CD4-positive, alpha-beta T cell (primary cell): ENCODE measurements at regions of chr11 and their contacts with region 1.

Region 1: DNA sequence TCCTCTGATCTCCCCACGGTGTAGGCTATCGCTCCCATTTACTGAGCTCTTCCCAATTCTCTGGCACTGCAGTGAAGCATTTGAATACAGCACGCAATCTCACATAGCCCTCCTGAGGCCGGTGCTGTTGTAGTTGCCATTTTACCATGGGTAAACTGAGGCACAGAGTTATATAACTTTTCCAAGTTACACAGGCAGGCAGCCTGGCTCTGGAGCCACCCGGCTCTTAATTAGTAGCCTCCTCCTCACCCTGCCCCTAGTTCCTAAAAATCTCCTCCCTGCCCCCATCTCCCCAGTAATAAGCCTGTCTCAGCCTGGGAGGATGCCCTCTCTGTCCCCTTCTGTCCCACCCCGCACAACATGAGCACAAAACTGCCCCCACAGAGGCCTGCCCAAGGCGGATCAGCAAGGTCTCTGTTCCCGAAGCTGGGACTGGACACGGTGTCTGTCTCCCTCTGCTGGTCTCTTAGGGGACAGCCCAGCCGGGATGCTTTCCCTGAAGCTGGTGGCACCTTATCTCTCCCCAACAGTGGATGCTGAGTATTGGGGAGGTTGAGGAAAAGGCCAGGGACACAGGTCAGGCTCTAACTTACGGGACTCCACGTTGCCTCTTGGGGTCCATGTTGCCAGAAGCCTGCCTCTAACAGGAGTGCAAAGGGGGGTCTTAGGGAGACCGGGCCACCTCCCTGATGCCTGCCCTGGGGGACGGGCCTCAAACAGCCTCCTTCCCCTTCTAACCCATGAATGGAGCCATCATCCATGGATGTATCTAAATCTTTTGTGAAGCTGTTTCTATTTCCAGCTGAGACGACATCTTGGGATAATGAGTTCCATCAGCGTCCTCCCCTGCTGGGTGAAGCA is 9.1 kb upstream of the CLCF1 start:
- DNase-seq: peak; percentile 72 to 90 (median 82)
- ATAC-seq: peak; percentile 99
- H3K4me3 ChIP-seq: no peak overlapping the region
- H3K4me3 Mint-ChIP-seq: no peak overlapping the region
- H3K27ac ChIP-seq: no peak overlapping the region
- H3K27ac Mint-ChIP-seq: no peak overlapping the region
- H3K4me1 ChIP-seq: peaks cover 15% of the 10 kb centered on the region
- H3K4me1 Mint-ChIP-seq: peaks cover 5% of the 10 kb centered on the region
- H3K27me3 ChIP-seq: no peaks in the 10 kb centered on the region
- H3K27me3 Mint-ChIP-seq: peaks cover 4% of the 10 kb centered on the region
- CTCF ChIP-seq: peak; percentile 92

Region 2: DNA sequence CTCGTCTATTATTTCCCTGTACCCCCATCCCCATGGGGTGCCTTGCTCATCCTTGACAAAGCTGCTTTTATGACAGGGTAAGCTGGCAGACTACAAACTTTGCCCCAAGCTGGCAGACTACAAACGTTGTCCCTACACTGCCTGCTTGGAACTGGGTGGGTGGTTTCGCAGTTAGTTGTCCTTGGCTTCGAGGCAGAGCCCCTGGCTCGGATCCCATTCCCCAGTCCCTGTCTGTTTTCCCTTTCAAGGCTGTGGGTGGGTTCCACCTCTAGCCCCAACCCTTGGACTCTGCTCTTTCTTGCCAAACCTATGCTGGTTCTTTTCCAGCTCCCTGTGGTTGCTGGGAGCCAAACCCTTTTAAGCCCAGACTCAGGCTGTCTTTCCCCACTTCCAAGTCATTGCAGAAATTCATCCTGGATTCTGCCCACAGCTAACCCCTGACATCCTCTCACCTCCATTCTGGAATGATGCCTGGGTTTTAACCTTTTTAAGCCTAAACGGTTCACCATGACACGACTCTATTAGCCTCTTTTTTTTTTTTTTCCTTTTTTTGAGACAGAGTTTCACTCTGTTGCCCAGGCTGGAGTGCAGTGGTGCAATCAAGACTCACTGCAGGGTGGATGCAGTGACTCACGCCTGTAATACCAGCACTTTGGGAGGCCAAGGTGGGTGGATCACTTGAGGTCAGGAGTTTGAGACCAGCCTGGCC is 775.2 kb before region 1 on chr11:
- CTCF ChIA-PET with region 1: no interaction called
- POLR2A ChIA-PET with region 1: no interaction called
- intact Hi-C with region 1: no loop called
- DNase-seq: no peak
- ATAC-seq: no peak
- H3K4me3 ChIP-seq: no peak overlapping the region
- H3K4me3 Mint-ChIP-seq: no peak overlapping the region
- H3K27ac ChIP-seq: no peak overlapping the region
- H3K27ac Mint-ChIP-seq: no peak overlapping the region
- H3K4me1 ChIP-seq: no peaks in the 10 kb centered on the region
- H3K4me1 Mint-ChIP-seq: peaks cover 13% of the 10 kb centered on the region
- H3K27me3 ChIP-seq: no peaks in the 10 kb centered on the region
- H3K27me3 Mint-ChIP-seq: no peaks in the 10 kb centered on the region
- CTCF ChIP-seq: no peak

Region 3: DNA sequence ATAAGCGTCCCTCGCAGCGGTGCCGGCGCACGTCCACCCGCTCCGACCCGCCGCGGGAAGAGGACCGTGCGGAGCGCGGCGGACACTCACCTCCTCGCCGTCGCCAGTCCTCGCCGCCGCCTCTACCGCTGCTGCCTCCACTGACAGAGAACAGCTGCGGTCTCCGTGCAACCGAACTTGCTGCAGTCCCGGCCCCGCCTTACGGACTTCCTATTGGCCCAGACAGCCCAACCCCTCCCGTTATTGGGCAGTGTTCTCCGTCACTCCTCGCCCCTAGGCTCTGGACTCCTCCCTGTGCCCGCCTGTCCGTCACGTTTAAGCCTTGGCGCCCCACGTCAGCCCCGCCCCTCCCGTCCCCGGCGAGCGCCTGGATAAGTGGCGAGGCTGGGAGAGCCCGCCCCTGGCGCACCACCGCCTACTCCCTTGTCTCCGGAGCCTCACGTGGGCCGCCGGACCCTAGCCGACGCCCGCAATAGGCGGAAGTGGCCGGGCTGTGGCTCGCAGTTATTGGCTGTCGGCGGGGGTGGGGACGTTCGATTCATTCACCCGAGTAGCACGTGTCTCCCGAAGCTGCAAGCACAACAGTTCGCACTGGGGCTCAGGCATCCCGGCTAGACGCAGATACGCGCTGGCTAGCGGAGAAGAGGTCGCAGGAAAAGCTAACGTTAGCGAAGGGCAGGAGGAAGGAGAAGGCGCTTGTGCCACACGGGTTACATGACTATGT is 424.1 kb before region 1 on chr11 and contains the start of gene PC:
- CTCF ChIA-PET with region 1: no interaction called
- POLR2A ChIA-PET with region 1: no interaction called
- intact Hi-C with region 1: loop called in 1 of 2 experiments (anchors 5 kb)
- DNase-seq: peak; percentile 91 to 99 (median 96)
- ATAC-seq: peak; percentile 96
- H3K4me3 ChIP-seq: peak within 1 kb of the TSS; percentile 57
- H3K4me3 Mint-ChIP-seq: peak within 1 kb of the TSS; percentile 91
- H3K27ac ChIP-seq: peak within 1 kb of the TSS; percentile 33 to 41
- H3K27ac Mint-ChIP-seq: peak within 1 kb of the TSS; percentile 71
- H3K4me1 ChIP-seq: peaks cover 20% of the 10 kb centered on the region
- H3K4me1 Mint-ChIP-seq: peaks cover 21% of the 10 kb centered on the region
- H3K27me3 ChIP-seq: no peaks in the 10 kb centered on the region
- H3K27me3 Mint-ChIP-seq: no peaks in the 10 kb centered on the region
- CTCF ChIP-seq: no peak
- total RNA-seq, gene PC: 5.1 to 7.1 TPM

Region 4: DNA sequence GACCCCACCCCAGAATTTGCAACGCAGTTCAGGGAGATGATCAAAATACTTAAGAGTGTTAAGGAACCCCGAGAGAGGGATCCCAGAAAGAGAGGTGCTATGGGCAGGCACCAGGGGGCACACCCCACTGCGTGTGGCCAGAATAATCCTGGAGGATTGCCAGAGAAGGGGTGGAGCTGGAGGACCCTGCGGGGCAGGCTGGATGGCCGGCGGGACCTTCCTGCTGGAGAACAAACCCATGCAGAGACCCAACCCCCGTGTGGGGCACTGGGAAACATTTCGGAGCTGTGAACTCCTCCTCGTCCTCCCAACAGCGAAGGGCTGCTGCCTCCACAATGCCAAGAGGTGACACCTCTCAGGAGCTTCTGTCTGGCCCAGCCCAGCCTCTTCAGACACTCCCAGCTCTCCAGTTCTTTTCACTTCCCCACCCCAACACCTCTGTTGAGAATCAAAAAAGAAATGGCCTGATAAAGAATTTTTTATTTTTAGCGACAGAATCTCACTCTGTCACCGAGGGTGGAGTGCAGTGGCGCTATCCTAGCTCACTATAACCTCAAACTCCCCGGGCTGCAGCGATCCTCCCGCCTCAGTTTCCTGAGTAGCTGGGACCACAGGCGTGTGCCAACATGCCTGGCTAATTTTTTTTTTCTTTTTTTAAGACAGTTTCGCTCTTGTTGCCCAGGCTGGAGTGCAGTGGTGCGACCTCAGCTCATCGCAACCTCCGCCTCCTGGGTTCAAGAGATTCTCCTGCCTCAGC is 300.3 kb before region 1 on chr11:
- CTCF ChIA-PET with region 1: no interaction called
- POLR2A ChIA-PET with region 1: no interaction called
- intact Hi-C with region 1: loop called in 1 of 2 experiments (anchors 2 kb)
- DNase-seq: peak in 4 of 14 experiments; percentile 10 to 39 (median 21)
- ATAC-seq: peak; percentile 37
- H3K4me3 ChIP-seq: no peak overlapping the region
- H3K4me3 Mint-ChIP-seq: no peak overlapping the region
- H3K27ac ChIP-seq: no peak overlapping the region
- H3K27ac Mint-ChIP-seq: no peak overlapping the region
- H3K4me1 ChIP-seq: peaks cover 12% of the 10 kb centered on the region
- H3K4me1 Mint-ChIP-seq: peaks cover 11% of the 10 kb centered on the region
- H3K27me3 ChIP-seq: no peaks in the 10 kb centered on the region
- H3K27me3 Mint-ChIP-seq: peaks cover 11% of the 10 kb centered on the region
- CTCF ChIP-seq: no peak

Region 5: GRCh38 chr11:67345920-67346799 is 36.3 kb before region 1 on chr11:
- CTCF ChIA-PET with region 1: interaction called, 241 read pairs
- POLR2A ChIA-PET with region 1: interaction called, 56 read pairs
- intact Hi-C with region 1: loop called (anchors 1 to 5 kb)
- DNase-seq: peak in 4 of 14 experiments; percentile 39 to 65 (median 55)
- ATAC-seq: peak; percentile 71
- H3K4me3 ChIP-seq: no peak overlapping the region
- H3K4me3 Mint-ChIP-seq: peak overlapping the region; percentile 57
- H3K27ac ChIP-seq: peak overlapping the region in 1 of 2 donors; percentile 18
- H3K27ac Mint-ChIP-seq: peak overlapping the region; percentile 78
- H3K4me1 ChIP-seq: peaks cover 40% of the 10 kb centered on the region
- H3K4me1 Mint-ChIP-seq: peaks cover 63% of the 10 kb centered on the region
- H3K27me3 ChIP-seq: no peaks in the 10 kb centered on the region
- H3K27me3 Mint-ChIP-seq: no peaks in the 10 kb centered on the region
- CTCF ChIP-seq: peak; percentile 81

Region 6: DNA sequence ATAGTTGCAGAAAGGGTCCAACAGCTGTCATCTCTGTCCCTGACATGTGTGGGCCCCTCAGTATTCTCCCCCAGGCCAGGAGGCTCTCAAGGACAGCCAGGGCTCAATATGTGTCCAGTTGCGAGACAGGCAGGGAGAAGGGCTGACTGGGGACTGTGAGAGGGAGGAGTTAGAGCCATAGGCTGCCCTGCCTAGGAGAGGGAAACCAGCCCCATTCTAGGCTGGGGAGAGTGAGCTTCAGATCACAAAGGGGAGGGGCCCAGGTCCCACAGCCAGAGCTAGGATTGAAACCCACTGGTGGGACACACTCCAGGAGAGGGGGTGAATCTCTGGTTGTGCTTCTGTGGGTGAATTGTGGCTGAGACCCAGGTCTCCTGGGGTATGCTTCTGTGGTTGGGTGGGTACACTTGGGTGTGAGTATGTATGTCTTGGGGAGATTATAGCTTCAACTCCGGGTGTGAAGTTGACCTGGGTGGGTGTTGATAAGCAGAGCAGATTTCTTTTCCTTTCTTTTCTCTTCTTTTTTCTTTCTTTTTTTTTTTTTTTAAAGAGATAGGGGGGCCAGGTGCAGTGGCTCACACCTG is 30.9 kb after region 1 on chr11:
- CTCF ChIA-PET with region 1: no interaction called
- POLR2A ChIA-PET with region 1: no interaction called
- intact Hi-C with region 1: no loop called
- DNase-seq: no peak
- ATAC-seq: no peak
- H3K4me3 ChIP-seq: no peak overlapping the region
- H3K4me3 Mint-ChIP-seq: peak overlapping the region; percentile 82
- H3K27ac ChIP-seq: peak overlapping the region in 1 of 2 donors; percentile 84
- H3K27ac Mint-ChIP-seq: peak overlapping the region; percentile 98
- H3K4me1 ChIP-seq: peaks cover 98% of the 10 kb centered on the region
- H3K4me1 Mint-ChIP-seq: peaks cover 83% of the 10 kb centered on the region
- H3K27me3 ChIP-seq: no peaks in the 10 kb centered on the region
- H3K27me3 Mint-ChIP-seq: no peaks in the 10 kb centered on the region
- CTCF ChIP-seq: no peak